Dorsolateral prefrontal cortex (tissue), 120 donors: ENCODE measurements at regions of chr6 and their contacts with region 1.

Region 1: DNA sequence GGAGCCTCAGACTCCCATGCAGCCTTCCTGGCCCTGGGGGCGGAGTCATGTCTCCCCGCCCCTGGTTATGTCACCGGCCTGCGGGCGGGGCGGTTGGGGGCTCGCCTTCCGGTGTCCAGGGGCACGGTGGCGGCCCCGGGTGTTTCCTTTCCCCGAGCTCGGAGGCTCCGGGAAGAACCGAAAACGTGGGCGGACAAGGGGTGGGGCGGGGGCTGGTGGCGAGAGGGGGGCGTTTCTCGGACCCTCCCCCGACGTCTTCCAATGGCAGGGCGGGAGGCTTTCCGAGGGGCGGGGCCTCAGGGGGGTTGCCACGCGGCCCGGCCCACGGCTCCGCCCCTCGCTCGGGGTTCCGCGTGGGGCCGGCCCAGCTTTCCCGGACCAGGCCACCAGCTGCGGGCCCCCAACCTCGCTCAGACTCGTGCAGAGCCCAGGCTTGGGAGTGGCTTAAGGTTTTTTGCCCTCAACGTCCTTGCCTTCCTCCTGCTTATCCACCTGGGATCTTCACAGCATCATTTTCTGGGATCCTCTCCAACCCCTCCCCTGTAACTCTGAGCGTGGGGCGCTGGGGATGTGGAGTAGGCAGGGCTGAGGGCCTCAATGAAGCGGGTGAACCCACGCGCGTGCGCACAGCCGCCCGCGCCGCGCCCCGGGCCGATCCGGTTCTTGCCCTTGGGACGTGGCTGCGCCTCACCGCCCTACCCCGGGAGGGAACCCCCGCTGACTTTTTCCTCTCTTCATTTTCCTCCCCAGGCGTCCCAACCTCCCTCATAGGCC is 2.1 kb upstream of the NRN1 start:
- DNase-seq: peak in 6 of 10 donors; percentile 49 to 83 (median 66)
- H3K4me3 ChIP-seq: peak overlapping the region; percentile 12 to 74 (median 58)
- H3K27ac ChIP-seq: peak overlapping the region in 50 of 59 donors; percentile 9 to 96 (median 85)
- H3K27me3 ChIP-seq: peaks cover 3 to 89% (median 58%) of the 10 kb centered on the region in 45 donors
- CTCF ChIP-seq: no peak

Region 2: GRCh38 chr6:5670811-5671561 is 337.8 kb before region 1 on chr6:
- intact Hi-C with region 1: loop called in 1 of 2 experiments (anchors 10 kb)
- DNase-seq: peak in 2 of 10 donors; percentile 44 to 59
- H3K4me3 ChIP-seq: peak overlapping the region in 27 of 59 donors; percentile 1 to 48 (median 22)
- H3K27ac ChIP-seq: peak overlapping the region in 53 of 59 donors; percentile 3 to 87 (median 71)
- H3K27me3 ChIP-seq: no peaks in the 10 kb centered on the region
- CTCF ChIP-seq: no peak

Region 3: GRCh38 chr6:6105472-6106036 is 96.7 kb after region 1 on chr6:
- intact Hi-C with region 1: no loop called
- DNase-seq: no peak
- H3K4me3 ChIP-seq: no peak overlapping the region
- H3K27ac ChIP-seq: no peak overlapping the region
- H3K27me3 ChIP-seq: no peaks in the 10 kb centered on the region
- CTCF ChIP-seq: no peak

Region 4: GRCh38 chr6:6315660-6316059 is 306.8 kb after region 1 on chr6:
- intact Hi-C with region 1: loop called in 1 of 2 experiments (anchors 5 kb)
- DNase-seq: peak in 4 of 10 donors; percentile 20 to 60 (median 36)
- H3K4me3 ChIP-seq: peak overlapping the region in 1 of 59 donors; percentile 15
- H3K27ac ChIP-seq: no peak overlapping the region
- H3K27me3 ChIP-seq: peaks cover 0 to 19% (median 4%) of the 10 kb centered on the region in 45 donors
- CTCF ChIP-seq: peak; percentile 53 to 82 (median 76)

Region 5: GRCh38 chr6:6407071-6407741 is 398.4 kb after region 1 on chr6:
- intact Hi-C with region 1: no loop called
- DNase-seq: no peak
- H3K4me3 ChIP-seq: no peak overlapping the region
- H3K27ac ChIP-seq: peak overlapping the region in 2 of 59 donors; percentile 3 to 21
- H3K27me3 ChIP-seq: peaks cover 0 to 3% (median 0%) of the 10 kb centered on the region in 45 donors
- CTCF ChIP-seq: no peak